Heart left ventricle (tissue), 16 donors: ENCODE measurements at regions of chr1 and their contacts with region 1.

Region 1: DNA sequence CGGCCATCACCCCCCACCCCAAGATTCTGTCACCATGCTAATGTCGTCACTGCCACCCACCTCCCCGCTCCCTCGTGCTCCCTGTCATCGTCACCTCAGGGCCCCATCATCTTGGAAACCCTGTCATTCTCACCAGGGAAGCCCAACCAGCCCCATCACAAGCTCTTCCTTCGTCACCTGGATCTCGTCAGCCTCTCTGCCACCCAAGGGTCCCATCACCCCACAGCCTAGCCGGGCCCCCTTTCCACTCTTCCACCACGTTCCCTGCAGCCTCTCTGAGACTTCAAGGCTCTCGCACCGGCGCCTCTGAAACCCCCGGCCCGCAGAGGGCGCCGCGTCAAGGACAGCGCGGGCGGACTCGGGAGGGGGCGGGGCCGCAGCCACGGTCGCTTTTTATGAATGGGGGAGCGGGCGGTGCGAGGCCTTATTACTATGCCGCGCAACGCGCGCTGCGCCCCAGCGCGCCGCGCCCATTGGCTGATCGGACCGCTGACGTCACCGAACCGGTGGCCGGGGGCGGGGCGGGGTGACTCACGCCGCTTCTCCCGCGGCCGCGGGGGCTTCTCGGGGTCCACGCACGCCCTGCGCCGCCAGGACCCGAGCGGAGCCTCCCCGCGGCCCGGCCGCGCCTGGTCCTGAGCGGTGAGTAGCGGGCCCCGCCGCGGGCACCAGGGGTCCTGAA is at the start of gene GPR3:
- DNase-seq: peak; percentile 91 to 96 (median 94)
- ATAC-seq: peak; percentile 81 to 90 (median 88)
- H3K4me3 ChIP-seq: peak within 1 kb of the TSS; percentile 32 to 78 (median 58)
- H3K27ac ChIP-seq: peak within 1 kb of the TSS in 11 of 12 donors; percentile 51 to 83 (median 71)
- H3K4me1 ChIP-seq: peaks cover 7 to 51% (median 28%) of the 10 kb centered on the region in 12 donors
- H3K27me3 ChIP-seq: no peaks in the 10 kb centered on the region
- CTCF ChIP-seq: peak; percentile 19 to 80 (median 58)
- POLR2A ChIP-seq: peak in 1 of 2 donors; percentile 67
- total RNA-seq, gene GPR3: 0.28 to 2.4 (median 0.53) TPM in 8 of 9 donors, not detected in the other

Region 2: DNA sequence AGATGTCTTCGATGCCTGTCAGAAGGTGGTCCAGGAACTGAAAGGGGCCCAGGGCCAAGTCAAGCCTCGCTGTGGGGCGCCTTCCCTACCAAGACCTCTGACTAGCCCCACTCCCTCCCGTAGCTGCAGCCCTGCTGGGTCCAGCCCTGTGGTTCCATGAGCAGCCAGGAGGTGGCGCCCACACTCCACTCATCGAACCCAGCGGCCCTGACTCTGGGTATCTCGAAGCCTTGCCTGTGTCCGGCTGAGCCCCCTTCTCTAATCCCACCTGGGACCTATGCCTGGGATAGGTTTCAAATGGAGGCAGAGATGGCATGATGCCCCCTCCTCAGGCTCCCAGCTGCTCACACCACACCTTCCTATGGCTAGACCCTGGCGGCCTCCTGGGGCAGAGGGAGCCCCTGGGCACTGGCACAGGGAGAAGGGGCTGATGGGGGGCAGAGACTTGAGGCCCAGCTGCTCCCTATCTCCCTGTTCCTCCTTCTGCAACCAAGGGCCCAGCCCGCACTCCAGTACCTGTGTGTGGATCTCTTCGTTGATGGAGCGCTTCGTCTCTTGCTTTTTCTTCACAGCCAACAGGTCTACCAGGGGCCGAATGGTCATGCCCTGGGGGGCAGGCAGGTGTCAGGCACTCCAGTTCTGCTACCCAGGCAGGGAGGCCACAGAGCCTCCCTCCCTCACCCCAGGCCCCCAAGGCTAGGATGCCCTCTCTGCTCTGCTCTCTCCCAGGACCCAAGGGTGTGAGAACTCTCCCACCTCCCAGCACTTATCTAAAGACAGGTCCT is 289.3 kb before region 1 on chr1:
- intact Hi-C with region 1: loop called in 5 of 10 experiments (anchors 5 to 10 kb)
- DNase-seq: peak; percentile 66 to 89 (median 79)
- ATAC-seq: peak in 3 of 4 donors; percentile 33 to 44 (median 42)
- H3K4me3 ChIP-seq: no peak overlapping the region
- H3K27ac ChIP-seq: peak overlapping the region in 1 of 12 donors; percentile 16
- H3K4me1 ChIP-seq: peaks cover 3 to 38% (median 24%) of the 10 kb centered on the region in 12 donors
- H3K27me3 ChIP-seq: no peaks in the 10 kb centered on the region
- CTCF ChIP-seq: peak; percentile 91 to 99 (median 96)
- POLR2A ChIP-seq: no peak

Region 3: GRCh38 chr1:27300341-27301051 is 91.7 kb before region 1 on chr1:
- intact Hi-C with region 1: loop called (anchors 1 to 2 kb)
- DNase-seq: peak; percentile 75 to 92 (median 83)
- ATAC-seq: peak; percentile 77 to 87 (median 85)
- H3K4me3 ChIP-seq: no peak overlapping the region
- H3K27ac ChIP-seq: peak overlapping the region; percentile 48 to 94 (median 79)
- H3K4me1 ChIP-seq: peaks cover 3 to 44% (median 31%) of the 10 kb centered on the region in 12 donors
- H3K27me3 ChIP-seq: no peaks in the 10 kb centered on the region
- CTCF ChIP-seq: peak; percentile 92 to 100 (median 98)
- POLR2A ChIP-seq: no peak

Region 4: DNA sequence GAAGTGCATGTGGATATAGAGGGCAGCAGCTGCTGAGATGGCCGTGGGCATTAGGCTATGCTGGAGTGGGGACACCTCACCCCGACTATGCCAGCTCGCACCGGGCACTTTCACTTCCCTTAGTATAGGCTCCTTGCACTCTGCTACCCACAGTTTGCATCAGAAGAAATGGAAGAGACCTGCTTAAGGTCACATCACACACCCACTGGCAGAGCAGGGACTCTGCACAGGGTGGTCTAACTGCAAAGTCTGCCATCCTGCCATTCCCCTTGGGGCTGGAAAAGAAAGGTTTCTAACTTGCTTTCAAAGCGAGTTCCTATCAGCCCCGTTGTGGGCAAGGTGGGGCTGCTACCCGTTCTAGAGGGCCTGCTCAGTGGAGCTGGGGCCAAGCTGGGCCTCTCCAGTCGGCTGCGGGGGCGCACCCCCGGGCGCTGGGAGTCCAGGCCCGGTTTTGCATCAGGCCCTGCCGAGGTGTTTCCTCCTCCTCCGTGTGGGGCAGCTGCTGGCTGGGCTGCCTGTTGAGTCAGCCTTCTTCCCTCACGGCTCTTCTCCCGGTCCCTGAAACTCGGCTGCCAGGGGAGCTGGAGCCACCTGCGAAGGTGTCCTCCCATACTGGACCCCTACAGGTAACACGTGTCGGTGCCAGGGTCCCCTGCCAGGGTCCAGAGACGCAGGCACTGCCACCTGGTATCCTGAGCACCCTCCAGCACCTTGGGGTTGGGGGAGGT is 50.5 kb before region 1 on chr1 and contains the start of gene SYTL1:
- intact Hi-C with region 1: no loop called
- DNase-seq: peak in 1 of 5 donors; percentile 66
- ATAC-seq: peak in 2 of 4 donors; percentile 25 to 51
- H3K4me3 ChIP-seq: peak within 1 kb of the TSS in 6 of 12 donors; percentile 2 to 60 (median 30)
- H3K27ac ChIP-seq: peak within 1 kb of the TSS in 3 of 12 donors; percentile 29 to 88 (median 37)
- H3K4me1 ChIP-seq: peaks cover 0 to 32% (median 4%) of the 10 kb centered on the region in 12 donors
- H3K27me3 ChIP-seq: no peaks in the 10 kb centered on the region
- CTCF ChIP-seq: no peak
- POLR2A ChIP-seq: no peak
- total RNA-seq, gene SYTL1: 0.23 to 6.0 (median 0.46) TPM in 8 of 9 donors, not detected in the other

Region 5: GRCh38 chr1:27357281-27358037 is 34.8 kb before region 1 on chr1:
- intact Hi-C with region 1: loop called in 9 of 10 experiments (anchors 2 to 5 kb)
- DNase-seq: peak; percentile 70 to 88 (median 80)
- ATAC-seq: peak; percentile 28 to 83 (median 62)
- H3K4me3 ChIP-seq: peak overlapping the region in 2 of 12 donors; percentile 11 to 42
- H3K27ac ChIP-seq: peak overlapping the region in 1 of 12 donors; percentile 9
- H3K4me1 ChIP-seq: peaks cover 0 to 27% (median 6%) of the 10 kb centered on the region in 12 donors
- H3K27me3 ChIP-seq: no peaks in the 10 kb centered on the region
- CTCF ChIP-seq: peak; percentile 94 to 100 (median 98)
- POLR2A ChIP-seq: no peak

Region 6: DNA sequence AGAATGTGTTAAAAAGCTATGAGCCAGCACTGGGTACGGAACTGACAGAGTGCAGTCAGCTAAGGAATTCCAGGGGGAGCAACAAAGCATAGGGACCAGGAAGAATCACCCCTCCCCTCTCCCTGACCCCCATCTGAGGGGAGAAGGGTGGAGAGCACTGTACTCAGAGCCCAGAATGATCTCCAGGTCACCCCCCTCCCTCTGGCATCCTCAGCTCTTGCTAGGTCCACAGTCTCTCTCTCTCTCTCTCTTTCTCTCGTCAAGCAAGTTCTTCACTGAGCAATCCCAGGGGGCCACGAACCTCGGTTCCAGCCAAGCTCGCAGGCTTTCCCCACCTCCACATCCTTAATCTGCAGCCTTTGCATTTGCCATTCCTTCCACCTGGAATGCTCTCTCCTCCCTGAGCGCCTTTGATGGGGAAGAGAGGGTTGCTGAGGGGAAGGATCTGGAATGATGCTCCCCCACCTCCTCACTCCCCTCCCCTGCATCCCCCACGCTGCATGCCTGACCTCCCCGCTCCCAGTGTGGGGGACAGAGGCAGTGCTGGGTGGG is 104.4 kb after region 1 on chr1:
- intact Hi-C with region 1: no loop called
- DNase-seq: peak in 2 of 5 donors; percentile 48
- ATAC-seq: peak in 3 of 4 donors; percentile 30 to 34 (median 31)
- H3K4me3 ChIP-seq: peak overlapping the region in 6 of 12 donors; percentile 5 to 28 (median 20)
- H3K27ac ChIP-seq: no peak overlapping the region
- H3K4me1 ChIP-seq: peaks cover 5 to 23% (median 16%) of the 10 kb centered on the region in 12 donors
- H3K27me3 ChIP-seq: no peaks in the 10 kb centered on the region
- CTCF ChIP-seq: peak in 2 of 12 donors; percentile 15 to 38
- POLR2A ChIP-seq: no peak

Region 7: GRCh38 chr1:27662707-27663393 is 270.6 kb after region 1 on chr1:
- intact Hi-C with region 1: loop called in 8 of 10 experiments (anchors 2 to 10 kb)
- DNase-seq: peak; percentile 73 to 85 (median 82)
- ATAC-seq: peak; percentile 52 to 78 (median 68)
- H3K4me3 ChIP-seq: peak overlapping the region in 1 of 12 donors; percentile 27
- H3K27ac ChIP-seq: peak overlapping the region; percentile 27 to 90 (median 72)
- H3K4me1 ChIP-seq: peaks cover 4 to 63% (median 34%) of the 10 kb centered on the region in 12 donors
- H3K27me3 ChIP-seq: no peaks in the 10 kb centered on the region
- CTCF ChIP-seq: peak; percentile 84 to 95 (median 90)
- POLR2A ChIP-seq: no peak